Common myeloid progenitor, CD34-positive (primary cell): ENCODE measurements at regions of chr12 and their contacts with region 1.

Region 1: DNA sequence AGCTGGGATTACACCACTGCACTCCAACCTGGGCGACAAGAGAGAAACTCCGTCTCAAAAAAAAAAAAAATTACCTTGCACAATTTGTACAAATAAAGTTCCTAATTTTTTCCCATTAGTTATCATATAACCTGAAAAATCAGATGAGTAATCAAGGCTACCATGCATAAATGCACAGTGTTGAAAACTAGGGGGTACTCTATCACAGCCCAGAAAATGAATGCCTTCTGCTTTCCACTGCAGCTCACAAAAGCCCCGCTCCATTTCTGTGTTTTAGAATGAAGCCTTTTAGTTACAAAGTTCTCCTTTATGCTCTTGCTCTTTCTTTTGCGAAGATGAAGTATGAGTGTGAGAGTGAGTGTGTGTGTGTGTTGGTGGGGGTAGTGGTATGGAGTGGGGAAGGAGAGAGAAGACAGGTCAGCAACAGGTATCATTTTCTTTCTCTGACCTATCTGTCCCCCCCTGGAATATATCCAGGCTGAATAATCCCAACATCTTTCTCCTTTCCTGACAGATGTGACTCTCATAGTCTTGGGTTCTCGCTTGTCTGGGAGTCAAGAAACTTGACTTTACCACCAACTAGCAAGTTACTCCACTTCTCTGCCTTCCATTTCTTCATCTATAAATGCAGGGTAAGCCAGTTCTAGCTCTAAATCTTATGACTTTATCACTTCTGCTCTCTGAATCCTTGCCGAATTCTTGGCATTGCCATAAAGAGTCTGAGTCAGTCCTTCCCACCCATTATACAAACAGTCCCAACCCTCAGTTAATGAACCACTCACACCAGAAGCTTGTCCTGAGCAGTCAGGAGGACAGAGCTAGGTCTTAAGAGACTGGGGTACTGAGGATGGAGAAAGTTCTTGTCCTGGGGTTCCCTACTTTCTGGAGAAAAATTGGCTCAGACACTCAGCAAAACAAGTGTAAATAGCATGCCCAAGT is 16.1 kb downstream of the BIN2 start:
- DNase-seq: peak in 2 of 3 donors; percentile 41 to 46
- H3K4me3 ChIP-seq: no peak overlapping the region
- H3K27ac ChIP-seq: no peak overlapping the region
- H3K4me1 ChIP-seq: peaks cover 0 to 7% (median 3%) of the 10 kb centered on the region in 4 experiments
- H3K27me3 ChIP-seq: no peaks in the 10 kb centered on the region

Region 2: DNA sequence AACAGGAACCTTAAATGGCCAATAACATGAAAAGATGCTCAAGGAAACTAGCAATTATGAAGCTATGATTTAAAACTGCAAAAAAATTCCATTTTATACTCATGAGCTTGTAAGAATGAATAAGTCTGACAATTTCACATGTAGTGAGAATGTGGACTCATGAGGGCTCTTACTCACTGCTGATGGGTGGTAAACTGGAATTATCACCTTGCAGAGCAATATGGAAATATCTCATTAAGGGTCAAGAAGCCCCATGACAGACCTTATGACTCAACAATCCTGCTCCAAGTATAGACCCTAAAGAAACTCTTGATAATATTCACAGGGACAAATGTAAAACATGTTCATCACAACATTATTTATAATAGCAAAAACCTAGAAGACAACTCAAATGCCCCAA is 14.2 kb before region 1 on chr12:
- CTCF ChIA-PET with region 1: no interaction called
- POLR2A ChIA-PET with region 1: no interaction called
- DNase-seq: no peak
- H3K4me3 ChIP-seq: no peak overlapping the region
- H3K27ac ChIP-seq: no peak overlapping the region
- H3K4me1 ChIP-seq: no peaks in the 10 kb centered on the region
- H3K27me3 ChIP-seq: no peaks in the 10 kb centered on the region

Region 3: GRCh38 chr12:51320695-51321320 is 12.9 kb after region 1 on chr12:
- CTCF ChIA-PET with region 1: interaction called, 26 read pairs
- POLR2A ChIA-PET with region 1: no interaction called
- DNase-seq: peak in 2 of 3 donors; percentile 74 to 76
- H3K4me3 ChIP-seq: peak overlapping the region in 5 of 7 experiments; percentile 26 to 57 (median 47)
- H3K27ac ChIP-seq: peak overlapping the region; percentile 33 to 59
- H3K4me1 ChIP-seq: peaks cover 40 to 78% (median 73%) of the 10 kb centered on the region in 4 experiments
- H3K27me3 ChIP-seq: no peaks in the 10 kb centered on the region

Region 4: GRCh38 chr12:51326762-51327439 is 19.0 kb after region 1 on chr12:
- CTCF ChIA-PET with region 1: interaction called, 666 read pairs
- POLR2A ChIA-PET with region 1: no interaction called
- DNase-seq: peak; percentile 87 to 94 (median 93)
- H3K4me3 ChIP-seq: peak overlapping the region in 5 of 7 experiments; percentile 32 to 57 (median 43)
- H3K27ac ChIP-seq: peak overlapping the region; percentile 75 to 88
- H3K4me1 ChIP-seq: peaks cover 55 to 84% (median 82%) of the 10 kb centered on the region in 4 experiments
- H3K27me3 ChIP-seq: no peaks in the 10 kb centered on the region

Region 5: GRCh38 chr12:51399891-51400290 is 92.0 kb after region 1 on chr12:
- CTCF ChIA-PET with region 1: no interaction called
- POLR2A ChIA-PET with region 1: no interaction called
- DNase-seq: no peak
- H3K4me3 ChIP-seq: no peak overlapping the region
- H3K27ac ChIP-seq: no peak overlapping the region
- H3K4me1 ChIP-seq: peaks cover 8 to 38% (median 18%) of the 10 kb centered on the region in 4 experiments
- H3K27me3 ChIP-seq: no peaks in the 10 kb centered on the region